ENCODE measurements at regions of chr12 and their contacts with region 1.

Region 1: DNA sequence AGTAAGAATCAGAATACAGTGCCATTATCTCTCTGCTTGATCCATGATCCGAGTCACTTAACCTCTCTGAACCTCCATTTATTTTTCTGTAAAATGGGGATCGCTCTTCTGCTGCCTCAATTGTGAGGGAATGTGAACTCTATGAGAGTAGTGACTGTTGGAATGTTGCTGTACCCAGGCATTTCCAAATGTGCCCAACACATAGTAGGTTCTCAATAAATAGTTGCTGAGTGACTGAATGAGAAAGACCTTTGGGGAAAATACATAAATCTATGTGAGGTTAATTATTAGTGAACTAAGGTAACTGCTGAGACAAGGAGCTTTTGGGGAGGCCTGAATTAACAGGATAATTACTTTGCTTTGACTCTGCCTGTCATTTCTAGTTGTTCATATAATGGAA is 33.9 kb upstream of the NR1H4 start:
- DNase-seq: no peak
- ATAC-seq: no peak
- H3K4me3 ChIP-seq: no peak overlapping the region
- H3K27ac ChIP-seq: no peak overlapping the region
- H3K4me1 ChIP-seq: no peaks in the 10 kb centered on the region
- H3K27me3 ChIP-seq: no peaks in the 10 kb centered on the region
- CTCF ChIP-seq: no peak

Region 2: GRCh38 chr12:101280006-101280505 is 840.3 kb after region 1 on chr12 and contains the start of gene UTP20:
- CTCF ChIA-PET with region 1: no interaction called
- POLR2A ChIA-PET with region 1: interaction called, 13 read pairs
- in situ Hi-C with region 1: no loop called
- intact Hi-C with region 1: no loop called
- DNase-seq: peak; percentile 54
- ATAC-seq: peak; percentile 100
- H3K4me3 ChIP-seq: peak within 1 kb of the TSS; percentile 99 to 100
- H3K27ac ChIP-seq: peak within 1 kb of the TSS; percentile 95
- H3K4me1 ChIP-seq: peaks cover 6% of the 10 kb centered on the region
- H3K27me3 ChIP-seq: no peaks in the 10 kb centered on the region; the same call in 1 of the 2 replicates
- CTCF ChIP-seq: no peak
- total RNA-seq, gene UTP20: 33.5 TPM

Measured in Panc1 (cell line).